ENCODE measurements at regions of chr2 and their contacts with region 1.

Region 1: DNA sequence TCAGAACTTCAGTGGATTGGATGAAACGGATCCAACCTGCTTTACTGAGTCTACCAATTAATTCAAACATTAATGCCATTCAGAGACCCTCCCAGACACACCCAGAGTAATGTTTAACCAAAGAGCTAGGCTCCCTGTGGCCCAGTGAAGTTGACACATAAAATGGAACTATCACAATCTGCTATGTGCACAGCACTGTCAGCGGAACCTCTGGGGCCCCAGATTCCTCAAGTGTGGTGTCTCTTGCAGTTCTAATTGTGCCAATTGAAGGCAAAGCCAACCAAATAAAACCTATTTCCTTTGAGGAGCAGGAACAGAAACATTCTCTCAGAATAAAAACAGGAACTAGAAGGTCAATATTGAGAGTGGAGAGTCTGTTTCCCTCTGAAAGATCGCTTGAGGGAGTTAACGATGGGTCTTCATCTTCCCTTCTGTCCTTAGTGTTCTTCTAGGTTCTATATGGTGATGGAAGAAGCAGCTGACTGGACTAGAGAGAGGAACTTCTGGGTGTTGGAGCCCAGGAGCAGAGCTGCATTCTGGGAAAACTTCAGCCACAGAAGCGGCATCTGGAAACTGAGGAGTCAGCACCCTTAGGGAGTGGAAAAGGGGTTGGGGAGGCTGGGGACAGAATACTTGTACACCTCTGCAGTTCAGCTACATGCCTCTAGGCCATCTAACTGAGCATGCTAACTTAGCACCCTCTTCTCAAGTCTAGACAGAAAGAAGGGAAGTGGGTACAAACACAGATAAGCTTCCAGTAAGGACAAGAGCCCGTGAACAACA is 174.4 kb upstream of the FBXO11 start:
- DNase-seq: no peak
- ATAC-seq: peak in 5 of 8 donors; percentile 28 to 50 (median 46)
- H3K4me3 ChIP-seq: no peak overlapping the region
- H3K27ac ChIP-seq: no peak overlapping the region
- H3K4me1 ChIP-seq: no peaks in the 10 kb centered on the region
- H3K27me3 ChIP-seq: peaks cover 0 to 2% (median 0%) of the 10 kb centered on the region in 7 donors
- CTCF ChIP-seq: no peak

Region 2: DNA sequence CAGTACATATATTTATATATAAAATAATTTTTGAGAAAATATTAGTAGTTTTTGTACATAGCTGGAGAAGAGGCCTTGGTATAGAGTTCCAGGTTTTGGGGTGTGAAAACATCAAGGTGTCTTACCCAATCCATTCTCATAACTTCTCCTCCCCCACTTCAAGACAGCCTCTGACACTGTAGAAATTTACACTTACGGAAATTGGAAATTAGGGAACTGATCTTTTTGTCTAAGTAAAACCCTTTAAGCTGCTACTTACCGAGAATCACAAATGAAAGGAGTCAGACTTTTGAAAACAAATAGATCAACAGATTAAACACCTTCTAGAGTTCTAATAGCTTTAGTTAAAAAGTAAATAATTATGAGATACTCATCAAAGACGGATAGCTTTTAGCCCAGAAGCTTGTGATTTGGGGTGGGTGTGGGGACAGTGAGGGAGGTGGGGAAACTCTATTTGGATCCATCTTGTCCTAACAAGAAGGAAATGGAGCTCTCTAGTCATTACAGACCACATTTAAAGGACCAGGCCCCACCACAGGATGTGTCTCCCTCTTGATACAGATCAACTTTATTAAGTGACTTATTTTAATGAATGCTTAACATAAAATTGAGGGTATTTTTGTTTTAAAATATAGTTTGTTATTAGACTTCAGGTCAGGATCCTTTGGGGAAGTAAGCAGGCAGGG is 163.3 kb before region 1 on chr2:
- intact Hi-C with region 1: loop called in 1 of 10 experiments (anchors 10 kb)
- DNase-seq: no peak
- ATAC-seq: no peak
- H3K4me3 ChIP-seq: no peak overlapping the region
- H3K27ac ChIP-seq: peak overlapping the region in 1 of 10 donors; percentile 39
- H3K4me1 ChIP-seq: no peaks in the 10 kb centered on the region
- H3K27me3 ChIP-seq: no peaks in the 10 kb centered on the region
- CTCF ChIP-seq: no peak

Region 3: GRCh38 chr2:48265169-48266030 is 184.7 kb after region 1 on chr2:
- intact Hi-C with region 1: no loop called
- DNase-seq: no peak
- ATAC-seq: no peak
- H3K4me3 ChIP-seq: no peak overlapping the region
- H3K27ac ChIP-seq: peak overlapping the region in 1 of 10 donors; percentile 29
- H3K4me1 ChIP-seq: peaks cover 0 to 11% (median 0%) of the 10 kb centered on the region in 9 donors
- H3K27me3 ChIP-seq: no peaks in the 10 kb centered on the region
- CTCF ChIP-seq: no peak